Activated B cell treated with CpG ODN at 0.5 μM for 24 hours (primary cell): ENCODE measurements at regions of chr2 and their contacts with region 1.

Region 1: DNA sequence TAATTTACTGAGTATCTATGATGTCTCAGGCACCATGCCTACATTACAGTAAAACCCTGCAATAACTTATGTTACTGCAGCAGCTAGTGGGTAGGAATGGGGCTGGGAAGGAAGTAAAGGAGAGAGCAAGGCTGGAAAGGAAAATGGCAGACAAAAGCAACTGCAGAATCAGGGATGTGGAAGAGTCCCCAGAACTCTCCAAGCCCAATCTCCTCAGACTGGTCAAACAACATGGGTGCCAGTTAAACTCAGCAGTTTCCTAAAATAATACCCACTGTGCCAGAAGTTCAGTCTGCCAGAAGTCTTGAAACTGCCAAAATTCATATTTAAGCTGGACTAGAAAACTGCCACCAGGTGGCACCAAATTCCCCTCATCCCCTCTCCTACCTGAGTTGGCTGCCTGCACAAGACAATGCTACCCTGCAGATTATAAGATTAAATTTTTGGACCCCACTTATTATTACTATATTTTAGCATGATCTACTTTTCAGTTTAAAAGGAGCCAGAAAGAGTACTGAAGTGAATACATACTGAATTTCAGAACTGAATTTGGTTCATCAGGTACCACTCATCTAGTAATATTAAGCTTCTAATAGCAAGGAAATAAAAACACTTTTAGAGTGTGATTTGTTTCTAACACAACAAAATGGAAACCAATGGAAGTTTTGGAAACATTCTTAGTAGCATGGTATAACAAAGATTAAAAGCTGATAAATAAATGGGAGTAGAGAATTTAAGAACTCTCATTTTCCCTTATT is 86.8 kb upstream of the DNER start:
- DNase-seq: peak; percentile 35
- ATAC-seq: peak; percentile 58
- H3K4me3 Mint-ChIP-seq: no peak overlapping the region
- H3K27ac Mint-ChIP-seq: no peak overlapping the region
- H3K4me1 Mint-ChIP-seq: no peaks in the 10 kb centered on the region
- H3K27me3 Mint-ChIP-seq: no peaks in the 10 kb centered on the region
- CTCF ChIP-seq: no peak

Region 2: GRCh38 chr2:229003256-229003655 is 797.9 kb before region 1 on chr2:
- CTCF ChIA-PET with region 1: no interaction called
- POLR2A ChIA-PET with region 1: no interaction called
- intact Hi-C with region 1: no loop called
- DNase-seq: no peak
- ATAC-seq: no peak
- H3K4me3 Mint-ChIP-seq: no peak overlapping the region
- H3K27ac Mint-ChIP-seq: no peak overlapping the region
- H3K4me1 Mint-ChIP-seq: no peaks in the 10 kb centered on the region
- H3K27me3 Mint-ChIP-seq: no peaks in the 10 kb centered on the region
- CTCF ChIP-seq: no peak

Region 3: GRCh38 chr2:229852565-229852964 is 51.4 kb after region 1 on chr2:
- CTCF ChIA-PET with region 1: no interaction called
- POLR2A ChIA-PET with region 1: no interaction called
- intact Hi-C with region 1: loop called (anchors 5 kb)
- DNase-seq: no peak
- ATAC-seq: peak; percentile 54
- H3K4me3 Mint-ChIP-seq: no peak overlapping the region
- H3K27ac Mint-ChIP-seq: no peak overlapping the region
- H3K4me1 Mint-ChIP-seq: peaks cover 53% of the 10 kb centered on the region
- H3K27me3 Mint-ChIP-seq: no peaks in the 10 kb centered on the region
- CTCF ChIP-seq: no peak

Region 4: DNA sequence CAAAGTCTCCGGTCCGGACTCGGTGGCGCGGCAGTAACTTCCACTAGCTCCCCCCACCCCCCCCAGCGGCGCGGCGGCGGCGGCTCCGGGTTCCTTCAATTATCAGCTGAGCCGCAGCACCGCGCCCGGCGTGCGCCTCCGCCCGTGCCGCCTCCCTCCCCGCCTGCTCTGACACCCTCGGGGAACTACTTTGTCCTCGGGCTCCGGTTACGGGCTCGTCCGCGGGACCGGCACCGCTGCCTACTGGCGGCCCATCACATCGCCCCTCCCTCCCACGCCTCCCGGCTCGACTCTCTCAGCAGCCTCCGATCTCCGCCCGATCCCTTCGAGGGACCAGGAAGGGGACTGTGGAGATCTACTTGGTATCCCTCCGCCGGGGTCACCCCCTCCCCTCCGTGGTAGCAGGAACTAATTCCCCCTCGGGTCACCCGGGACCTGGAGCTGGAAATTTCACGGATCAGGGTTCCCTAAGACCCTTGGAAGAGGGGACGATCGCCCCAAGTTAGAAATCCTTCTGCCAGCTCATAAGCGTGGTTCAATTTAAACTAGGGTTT is 120.8 kb after region 1 on chr2 and contains the start of gene TRIP12:
- CTCF ChIA-PET with region 1: interaction called, 6 read pairs
- POLR2A ChIA-PET with region 1: interaction called, 9 read pairs
- intact Hi-C with region 1: loop called (anchors 2 kb)
- DNase-seq: peak; percentile 94
- ATAC-seq: peak; percentile 76
- H3K4me3 Mint-ChIP-seq: peak within 1 kb of the TSS; percentile 94
- H3K27ac Mint-ChIP-seq: peak within 1 kb of the TSS; percentile 96
- H3K4me1 Mint-ChIP-seq: peaks cover 42% of the 10 kb centered on the region
- H3K27me3 Mint-ChIP-seq: no peaks in the 10 kb centered on the region
- CTCF ChIP-seq: no peak
- total RNA-seq, gene TRIP12: 255 and 272 TPM in 2 replicates

Region 5: DNA sequence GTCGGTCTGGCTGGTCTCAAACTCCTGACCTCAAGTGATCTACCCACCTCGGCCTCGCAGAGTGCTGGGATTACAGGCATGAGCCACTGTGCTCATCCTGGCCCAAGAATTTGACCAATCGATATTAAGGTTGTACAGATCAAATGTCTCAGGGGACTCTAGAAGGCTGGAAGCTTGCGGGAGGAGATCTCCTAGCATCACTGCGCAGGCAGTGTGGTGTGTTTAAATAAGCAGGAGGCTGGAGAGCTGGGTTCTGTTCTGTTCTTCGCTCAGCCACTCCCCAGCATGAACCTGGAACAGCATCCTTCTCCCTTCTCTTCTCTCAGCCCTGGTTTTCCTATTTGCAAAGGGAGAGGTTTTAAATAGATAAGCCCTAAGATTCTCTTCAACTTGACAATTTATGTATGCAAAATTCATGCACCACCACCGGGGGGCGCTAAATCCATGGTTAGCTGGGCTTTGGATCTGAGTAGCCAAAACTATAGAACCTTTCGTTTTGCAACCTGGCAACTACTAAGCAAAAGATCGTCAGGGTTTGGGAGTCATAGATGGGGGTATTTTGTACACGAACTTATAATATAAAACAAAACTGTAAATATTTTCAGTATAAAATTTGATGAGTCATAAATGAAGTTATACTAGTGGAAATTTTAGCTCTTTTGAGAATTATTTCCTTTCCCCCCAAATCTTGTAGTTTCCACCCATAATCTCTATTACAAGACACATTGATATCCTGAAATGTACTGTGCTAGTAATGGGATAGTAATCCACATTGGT is 206.9 kb after region 1 on chr2:
- CTCF ChIA-PET with region 1: no interaction called
- POLR2A ChIA-PET with region 1: no interaction called
- intact Hi-C with region 1: loop called (anchors 2 kb)
- DNase-seq: peak; percentile 63
- ATAC-seq: peak; percentile 75
- H3K4me3 Mint-ChIP-seq: no peak overlapping the region
- H3K27ac Mint-ChIP-seq: no peak overlapping the region
- H3K4me1 Mint-ChIP-seq: peaks cover 3% of the 10 kb centered on the region
- H3K27me3 Mint-ChIP-seq: no peaks in the 10 kb centered on the region
- CTCF ChIP-seq: peak; percentile 54

Region 6: GRCh38 chr2:230160112-230160660 is 359.0 kb after region 1 on chr2:
- CTCF ChIA-PET with region 1: interaction called, 9 read pairs
- POLR2A ChIA-PET with region 1: no interaction called
- intact Hi-C with region 1: loop called (anchors 1 kb)
- DNase-seq: peak; percentile 34
- ATAC-seq: peak; percentile 42
- H3K4me3 Mint-ChIP-seq: no peak overlapping the region
- H3K27ac Mint-ChIP-seq: no peak overlapping the region
- H3K4me1 Mint-ChIP-seq: peaks cover 24% of the 10 kb centered on the region
- H3K27me3 Mint-ChIP-seq: no peaks in the 10 kb centered on the region
- CTCF ChIP-seq: no peak